Activated CD8-positive, alpha-beta T cell treated with anti-CD3 and anti-CD28 coated beads for 36 hours (primary cell): ENCODE measurements at regions of chr15 and their contacts with region 1.

Region 1: GRCh38 chr15:68875377-68876116 is 54.8 kb upstream of the SPESP1 start:
- DNase-seq: peak; percentile 96
- ATAC-seq: peak; percentile 82
- H3K4me3 Mint-ChIP-seq: peak overlapping the region; percentile 39
- H3K27ac Mint-ChIP-seq: no peak overlapping the region
- H3K4me1 Mint-ChIP-seq: peaks cover 2% of the 10 kb centered on the region
- H3K27me3 Mint-ChIP-seq: peaks cover 17% of the 10 kb centered on the region
- CTCF ChIP-seq: peak; percentile 79

Region 2: GRCh38 chr15:68550481-68551295 is 324.9 kb before region 1 on chr15:
- CTCF ChIA-PET with region 1: interaction called, 32 read pairs
- POLR2A ChIA-PET with region 1: no interaction called
- intact Hi-C with region 1: loop called (anchors 5 kb)
- DNase-seq: peak; percentile 87
- ATAC-seq: peak; percentile 62
- H3K4me3 Mint-ChIP-seq: no peak overlapping the region
- H3K27ac Mint-ChIP-seq: no peak overlapping the region
- H3K4me1 Mint-ChIP-seq: peaks cover 3% of the 10 kb centered on the region
- H3K27me3 Mint-ChIP-seq: peaks cover 33% of the 10 kb centered on the region
- CTCF ChIP-seq: peak; percentile 90

Region 3: GRCh38 chr15:68672781-68673205 is 202.8 kb before region 1 on chr15:
- CTCF ChIA-PET with region 1: interaction called, 22 read pairs
- POLR2A ChIA-PET with region 1: no interaction called
- intact Hi-C with region 1: no loop called
- DNase-seq: no peak
- ATAC-seq: no peak
- H3K4me3 Mint-ChIP-seq: no peak overlapping the region
- H3K27ac Mint-ChIP-seq: no peak overlapping the region
- H3K4me1 Mint-ChIP-seq: peaks cover 3% of the 10 kb centered on the region
- H3K27me3 Mint-ChIP-seq: peaks cover 7% of the 10 kb centered on the region
- CTCF ChIP-seq: no peak

Region 4: DNA sequence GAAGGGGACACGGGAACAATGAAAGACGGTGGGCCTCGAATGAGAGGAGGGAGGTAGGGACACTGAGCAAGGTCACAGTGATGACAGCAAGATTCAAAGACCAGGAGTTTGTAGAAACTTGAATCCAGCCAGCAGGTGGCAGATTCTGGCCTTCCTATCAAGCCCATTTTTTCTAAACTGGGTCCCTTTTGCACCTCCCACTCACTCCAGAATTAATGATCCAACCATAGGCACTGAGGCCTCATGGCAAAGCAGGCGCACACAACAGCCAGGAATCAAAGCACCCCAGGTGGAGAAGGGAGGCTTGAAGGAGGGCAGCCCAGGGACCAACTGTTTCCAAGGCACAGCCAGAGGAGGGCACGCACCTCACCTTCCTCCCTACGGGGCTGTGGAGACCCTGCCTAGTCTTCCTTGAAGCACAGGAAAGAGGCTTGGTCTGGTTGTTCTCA is 145.1 kb before region 1 on chr15:
- CTCF ChIA-PET with region 1: interaction called, 16 read pairs
- POLR2A ChIA-PET with region 1: no interaction called
- intact Hi-C with region 1: loop called (anchors 2 kb)
- DNase-seq: peak; percentile 38
- ATAC-seq: no peak
- H3K4me3 Mint-ChIP-seq: no peak overlapping the region
- H3K27ac Mint-ChIP-seq: no peak overlapping the region
- H3K4me1 Mint-ChIP-seq: peaks cover 3% of the 10 kb centered on the region
- H3K27me3 Mint-ChIP-seq: peaks cover 5% of the 10 kb centered on the region
- CTCF ChIP-seq: peak; percentile 52

Region 5: DNA sequence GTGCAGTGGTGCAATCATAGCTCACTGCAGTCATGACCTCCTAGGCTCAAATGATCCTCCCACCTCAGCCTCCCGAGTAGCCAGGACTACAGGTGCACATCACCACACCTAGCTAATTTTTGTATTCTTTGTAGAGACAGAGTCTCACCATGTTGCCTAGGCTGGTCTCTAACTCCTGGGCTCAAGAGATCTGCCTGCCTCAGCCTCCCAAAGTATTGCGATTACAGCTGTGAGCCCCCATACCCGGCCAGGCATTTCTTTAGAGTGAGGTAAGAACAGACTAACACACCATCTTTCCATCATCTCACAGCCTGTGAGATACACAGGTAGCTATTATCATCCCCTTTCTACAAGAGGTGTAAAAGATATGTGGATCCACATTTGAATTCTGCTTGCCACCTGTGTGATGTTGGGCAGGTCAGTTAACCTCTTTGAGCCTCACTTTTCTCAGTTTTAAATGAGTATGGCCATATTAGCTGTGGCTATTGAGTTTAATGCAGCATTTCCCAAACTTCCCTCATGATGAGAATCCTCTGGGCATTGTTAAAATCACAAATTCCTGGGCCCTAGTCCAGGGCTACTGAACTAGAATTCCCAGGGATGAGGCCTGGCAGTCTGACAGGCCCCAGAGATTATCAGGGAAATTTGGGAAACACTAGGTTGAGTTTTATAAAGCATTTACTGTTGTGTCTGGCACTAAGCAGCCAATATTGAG is 100.9 kb before region 1 on chr15:
- CTCF ChIA-PET with region 1: interaction called, 55 read pairs
- POLR2A ChIA-PET with region 1: no interaction called
- intact Hi-C with region 1: loop called (anchors 5 kb)
- DNase-seq: no peak
- ATAC-seq: no peak
- H3K4me3 Mint-ChIP-seq: no peak overlapping the region
- H3K27ac Mint-ChIP-seq: no peak overlapping the region
- H3K4me1 Mint-ChIP-seq: peaks cover 2% of the 10 kb centered on the region
- H3K27me3 Mint-ChIP-seq: no peaks in the 10 kb centered on the region
- CTCF ChIP-seq: no peak

Region 6: GRCh38 chr15:68795298-68795848 is 80.2 kb before region 1 on chr15:
- CTCF ChIA-PET with region 1: interaction called, 17 read pairs
- POLR2A ChIA-PET with region 1: interaction called, 3 read pairs
- intact Hi-C with region 1: no loop called
- DNase-seq: peak; percentile 85
- ATAC-seq: peak; percentile 54
- H3K4me3 Mint-ChIP-seq: peak overlapping the region; percentile 40
- H3K27ac Mint-ChIP-seq: peak overlapping the region; percentile 72
- H3K4me1 Mint-ChIP-seq: peaks cover 97% of the 10 kb centered on the region
- H3K27me3 Mint-ChIP-seq: no peaks in the 10 kb centered on the region
- CTCF ChIP-seq: no peak

Region 7: DNA sequence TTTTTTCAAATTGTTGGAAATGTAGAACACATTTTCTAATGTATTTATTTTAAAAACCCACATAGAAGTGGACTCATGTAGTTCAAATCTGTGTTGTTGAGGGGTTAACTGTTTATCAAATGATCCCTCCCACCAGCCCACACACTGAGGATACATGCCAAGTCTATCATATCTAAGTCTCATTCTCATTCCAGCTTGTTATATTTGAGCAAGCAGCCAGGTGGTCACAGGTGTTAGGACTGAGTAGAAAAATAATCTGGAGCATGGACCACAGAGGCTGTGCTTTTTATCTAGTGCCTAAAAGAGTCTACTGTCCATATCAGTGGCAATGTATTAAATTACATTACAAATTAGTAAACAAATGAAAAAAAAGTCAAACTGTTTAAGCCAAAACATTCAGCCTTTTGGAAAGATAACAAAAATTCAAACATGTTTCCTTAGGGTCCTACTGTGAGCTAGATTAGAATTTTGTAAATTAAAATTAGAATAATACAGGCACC is 34.1 kb after region 1 on chr15:
- CTCF ChIA-PET with region 1: interaction called, 14 read pairs
- POLR2A ChIA-PET with region 1: no interaction called
- intact Hi-C with region 1: no loop called
- DNase-seq: no peak
- ATAC-seq: no peak
- H3K4me3 Mint-ChIP-seq: no peak overlapping the region
- H3K27ac Mint-ChIP-seq: no peak overlapping the region
- H3K4me1 Mint-ChIP-seq: no peaks in the 10 kb centered on the region
- H3K27me3 Mint-ChIP-seq: peaks cover 8% of the 10 kb centered on the region
- CTCF ChIP-seq: no peak

Region 8: DNA sequence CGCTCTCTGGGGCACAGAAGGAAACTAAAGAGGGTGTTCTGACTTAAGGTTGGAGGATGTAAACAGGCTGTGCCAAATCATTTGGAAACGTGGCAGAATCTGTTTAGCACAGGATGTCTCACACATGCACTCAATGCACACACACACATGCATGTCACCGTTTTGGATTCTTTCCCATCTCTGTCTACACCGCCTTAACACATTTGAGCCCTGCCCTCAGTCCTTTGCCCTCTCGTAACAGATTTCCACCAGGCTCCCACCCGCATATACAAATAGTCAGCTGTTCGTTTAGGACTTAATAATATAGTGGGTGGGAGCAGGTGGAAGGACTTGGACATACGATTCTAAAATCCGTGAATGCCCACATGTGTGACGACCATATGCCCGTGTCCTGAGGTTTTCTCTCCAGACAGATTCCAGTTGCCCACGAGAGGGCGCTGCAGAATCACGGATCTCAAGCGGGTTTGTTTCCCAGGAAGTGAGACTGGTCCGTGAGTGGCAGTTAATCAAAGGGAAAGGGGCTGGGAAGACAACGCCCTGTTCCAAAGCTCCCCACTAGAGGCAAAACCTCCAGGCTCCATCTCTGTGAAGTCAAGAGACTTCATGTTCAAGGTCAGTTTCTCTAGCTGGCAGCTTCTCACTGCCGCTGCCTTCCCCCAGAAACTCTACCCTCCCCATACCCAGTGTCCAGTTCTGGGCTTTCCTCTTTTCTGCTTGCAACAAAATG is 183.4 kb after region 1 on chr15:
- CTCF ChIA-PET with region 1: no interaction called
- POLR2A ChIA-PET with region 1: no interaction called
- intact Hi-C with region 1: no loop called
- DNase-seq: peak; percentile 86
- ATAC-seq: peak; percentile 57
- H3K4me3 Mint-ChIP-seq: no peak overlapping the region
- H3K27ac Mint-ChIP-seq: no peak overlapping the region
- H3K4me1 Mint-ChIP-seq: peaks cover 20% of the 10 kb centered on the region
- H3K27me3 Mint-ChIP-seq: peaks cover 4% of the 10 kb centered on the region
- CTCF ChIP-seq: peak; percentile 95

Region 9: GRCh38 chr15:69394556-69395282 is 519.2 kb after region 1 on chr15:
- CTCF ChIA-PET with region 1: no interaction called
- POLR2A ChIA-PET with region 1: no interaction called
- intact Hi-C with region 1: no loop called
- DNase-seq: peak; percentile 90
- ATAC-seq: peak; percentile 98
- H3K4me3 Mint-ChIP-seq: no peak overlapping the region
- H3K27ac Mint-ChIP-seq: no peak overlapping the region
- H3K4me1 Mint-ChIP-seq: peaks cover 6% of the 10 kb centered on the region
- H3K27me3 Mint-ChIP-seq: peaks cover 3% of the 10 kb centered on the region
- CTCF ChIP-seq: peak; percentile 96